Motor neuron (in vitro differentiated cells): ENCODE measurements at regions of chr13 and their contacts with region 1.

Region 1: DNA sequence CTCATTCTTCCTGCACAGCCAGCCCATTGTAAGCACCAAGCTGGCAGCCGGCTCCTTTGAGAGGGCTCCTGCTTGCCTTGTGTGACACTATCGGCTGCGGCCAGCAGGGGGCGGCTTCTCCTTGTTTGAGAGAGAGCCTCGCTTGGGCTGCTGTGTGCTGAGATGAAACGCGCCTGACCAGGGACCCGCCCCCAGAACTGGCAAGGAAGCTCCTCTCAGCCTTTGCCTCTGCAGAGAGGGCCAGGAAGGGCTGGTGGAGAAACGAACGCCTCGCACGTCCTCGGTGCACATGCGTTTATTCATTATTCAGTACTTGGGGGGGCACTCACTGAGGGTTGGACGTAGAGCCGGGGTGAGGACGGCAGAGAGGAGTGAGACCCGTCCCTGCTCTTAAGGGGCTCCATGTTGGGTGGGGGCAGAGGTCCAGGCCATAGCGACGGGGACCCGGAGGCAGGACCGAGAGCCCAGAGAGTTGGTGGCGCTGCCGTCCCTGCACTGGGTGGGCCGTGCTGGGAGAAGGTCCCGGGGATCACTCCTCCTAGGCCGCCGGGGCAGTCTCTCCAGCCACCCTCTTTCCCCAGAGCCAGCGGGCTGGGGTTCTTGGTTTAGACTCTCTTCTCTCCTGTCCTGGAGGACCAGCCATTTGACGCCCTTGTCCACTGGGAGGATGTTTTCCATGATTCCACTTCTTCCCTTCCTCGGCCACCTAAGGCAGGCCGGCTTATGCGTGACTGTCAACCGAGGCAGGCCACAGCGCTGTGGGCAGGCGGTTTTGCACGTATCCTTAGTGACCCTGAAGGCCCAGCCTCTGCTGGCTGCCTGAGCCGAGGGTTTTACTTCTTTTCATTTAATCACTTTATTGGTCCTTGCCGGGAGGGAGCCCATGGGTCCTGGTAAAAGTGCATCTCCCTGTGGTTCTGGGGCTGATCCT is 174.5 kb downstream of the KATNAL1 start:
- ATAC-seq: peak; percentile 99
- H3K4me3 ChIP-seq: no peak overlapping the region
- H3K27ac ChIP-seq: peak overlapping the region in 1 of 2 donors; percentile 21
- H3K4me1 ChIP-seq: peaks cover 3 to 4% of the 10 kb centered on the region in 2 donors

Region 2: DNA sequence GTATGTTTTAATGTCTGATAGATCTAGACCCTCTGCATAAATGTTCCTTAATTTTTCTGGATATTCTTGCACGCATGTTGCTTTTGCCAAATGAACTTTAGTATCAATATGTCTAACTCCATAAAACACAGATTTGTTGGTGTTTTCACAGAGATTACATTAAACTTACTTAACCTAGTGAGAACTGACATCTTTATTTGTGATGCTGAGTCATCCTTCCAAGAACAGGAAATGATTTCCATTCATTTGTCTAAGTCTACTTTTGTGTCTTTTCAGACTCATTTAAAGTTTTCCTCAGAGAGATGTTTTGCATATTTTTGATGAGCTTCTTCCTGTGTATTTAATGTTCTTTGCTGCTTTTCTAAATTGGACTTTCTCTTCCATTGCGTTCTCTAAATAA is 721.4 kb before region 1 on chr13:
- in situ Hi-C with region 1: no loop called
- ATAC-seq: no peak
- H3K4me3 ChIP-seq: no peak overlapping the region
- H3K27ac ChIP-seq: no peak overlapping the region
- H3K4me1 ChIP-seq: no peaks in the 10 kb centered on the region

Region 3: DNA sequence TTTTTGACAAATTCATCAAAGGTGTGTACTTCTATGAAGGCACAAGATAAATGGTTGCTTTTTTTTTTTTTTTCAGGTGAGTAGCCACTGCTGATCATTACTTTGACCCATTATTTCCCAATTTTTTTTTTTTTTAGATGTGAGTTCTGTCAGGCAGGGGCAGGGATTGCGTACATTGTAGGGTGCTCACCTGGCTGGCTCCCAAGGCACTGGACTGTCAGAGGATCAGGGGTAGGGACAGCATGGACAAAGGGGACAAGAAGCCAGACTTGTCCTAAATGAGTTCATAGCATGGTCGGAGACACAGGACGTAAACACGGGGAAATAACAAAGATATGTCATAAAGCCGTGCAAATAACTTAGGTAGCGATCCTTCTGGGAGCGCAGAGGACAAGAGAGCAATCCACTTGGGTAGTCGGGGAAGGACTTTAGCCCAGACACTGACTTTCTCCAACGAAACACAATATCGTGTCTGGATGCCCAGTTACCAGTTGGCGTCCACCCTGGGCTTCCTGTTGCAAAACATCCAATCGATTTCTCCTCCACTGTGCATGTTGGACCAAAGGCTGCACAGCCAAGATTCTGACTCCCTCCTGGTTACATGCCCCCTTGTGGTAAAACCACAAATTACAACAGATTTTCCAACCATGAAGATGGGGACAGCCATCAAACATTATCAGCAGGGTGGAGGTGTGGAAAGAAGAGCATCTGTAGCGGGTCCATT is 201.9 kb after region 1 on chr13:
- in situ Hi-C with region 1: loop called in 1 of 9 experiments (anchors 25 kb)
- ATAC-seq: peak in 2 of 8 experiments; percentile 7 to 53
- H3K4me3 ChIP-seq: no peak overlapping the region
- H3K27ac ChIP-seq: no peak overlapping the region
- H3K4me1 ChIP-seq: peaks cover 6 to 36% of the 10 kb centered on the region in 2 donors

Region 4: GRCh38 chr13:30465585-30466357 is 332.9 kb after region 1 on chr13 and contains the start of gene HMGB1:
- in situ Hi-C with region 1: loop called in 3 of 9 experiments (anchors 25 kb)
- ATAC-seq: peak; percentile 88 to 94 (median 92)
- H3K4me3 ChIP-seq: peak within 1 kb of the TSS; percentile 66 to 99 (median 85)
- H3K27ac ChIP-seq: peak within 1 kb of the TSS; percentile 92 to 93
- H3K4me1 ChIP-seq: peaks cover 8 to 21% of the 10 kb centered on the region in 2 donors
- total RNA-seq, gene HMGB1: 258 to 721 (median 367) TPM

Region 5: GRCh38 chr13:30617315-30618185 is 484.7 kb after region 1 on chr13 and contains the start of gene USPL1:
- in situ Hi-C with region 1: loop called in 1 of 9 experiments (anchors 25 kb)
- ATAC-seq: peak; percentile 80 to 91 (median 88)
- H3K4me3 ChIP-seq: peak within 1 kb of the TSS; percentile 62 to 82 (median 65)
- H3K27ac ChIP-seq: peak within 1 kb of the TSS; percentile 89 to 93
- H3K4me1 ChIP-seq: peaks cover 3 to 23% of the 10 kb centered on the region in 2 donors
- total RNA-seq, gene USPL1: 10.8 to 32.5 (median 25.2) TPM

Region 6: DNA sequence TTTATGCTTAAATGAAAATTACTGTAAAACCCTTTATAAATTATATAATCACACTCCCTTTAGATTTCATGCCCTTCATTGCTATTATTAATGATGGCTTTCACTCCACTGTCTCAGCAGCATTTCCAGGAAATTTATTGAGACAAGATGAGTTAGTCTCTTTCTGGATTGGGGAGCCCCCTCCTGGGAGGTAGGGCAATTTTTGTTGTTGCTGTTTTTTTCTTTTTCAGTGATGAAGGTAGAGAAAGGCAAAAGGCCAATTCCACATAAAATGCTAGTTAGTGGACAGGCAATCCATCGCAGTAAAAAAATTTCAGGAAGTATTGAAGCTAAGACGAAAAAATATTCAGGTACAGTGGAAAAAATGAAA is 879.8 kb after region 1 on chr13:
- in situ Hi-C with region 1: loop called in 1 of 9 experiments (anchors 25 kb)
- ATAC-seq: peak in 5 of 8 experiments; percentile 29 to 49 (median 45)
- H3K4me3 ChIP-seq: no peak overlapping the region
- H3K27ac ChIP-seq: no peak overlapping the region
- H3K4me1 ChIP-seq: peaks cover 13 to 20% of the 10 kb centered on the region in 2 donors